Posterior cingulate gyrus (tissue), 11 donors: ENCODE measurements at regions of chr14 and their contacts with region 1.

Region 1: DNA sequence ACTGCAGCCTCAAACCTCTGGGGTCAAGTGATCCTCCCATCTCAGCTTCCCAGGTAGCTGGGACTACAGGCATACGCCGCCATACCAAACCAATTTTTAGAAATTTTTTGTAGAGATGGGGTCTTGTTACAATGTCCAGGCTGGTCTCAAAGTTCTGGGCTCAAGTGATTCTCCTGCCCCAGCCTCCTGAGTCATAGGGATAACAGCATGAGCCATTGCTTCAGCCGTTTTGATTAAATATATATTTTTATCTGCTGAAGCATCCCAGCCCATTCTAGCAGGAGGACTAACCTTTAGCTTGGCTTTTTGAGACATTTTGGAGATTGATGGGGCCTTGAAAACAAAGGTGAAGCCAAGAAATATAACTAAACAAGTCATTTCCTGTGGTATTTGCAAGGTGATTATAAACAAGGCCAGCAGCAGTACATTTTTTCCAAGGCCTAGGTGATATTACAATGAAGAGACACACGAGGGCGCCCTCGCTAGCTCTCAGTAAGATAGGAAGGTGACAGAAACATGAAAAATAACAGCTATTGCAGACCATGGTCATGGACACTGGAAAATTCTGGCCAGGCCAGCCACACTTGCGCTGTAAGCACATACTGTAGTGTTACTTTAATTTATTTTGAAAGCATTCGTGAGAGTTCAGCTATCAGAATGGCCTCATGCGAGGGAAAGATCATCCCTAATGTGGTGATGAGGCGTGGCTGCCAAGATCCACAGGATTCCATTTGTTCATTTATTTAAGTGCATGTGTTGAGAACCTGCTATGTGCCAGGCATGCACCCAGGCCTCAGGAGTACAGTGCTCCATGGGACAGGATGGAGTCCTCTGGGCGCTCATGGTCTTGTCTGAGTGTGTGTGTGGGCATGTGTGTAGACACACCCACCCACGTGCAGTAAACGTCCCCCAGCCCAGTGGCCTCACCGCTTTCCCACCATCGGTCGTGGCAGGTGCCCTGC is 63.5 kb downstream of the DGLUCY start:
- DNase-seq: peak in 7 of 10 donors; percentile 24 to 83 (median 41)

Region 2: DNA sequence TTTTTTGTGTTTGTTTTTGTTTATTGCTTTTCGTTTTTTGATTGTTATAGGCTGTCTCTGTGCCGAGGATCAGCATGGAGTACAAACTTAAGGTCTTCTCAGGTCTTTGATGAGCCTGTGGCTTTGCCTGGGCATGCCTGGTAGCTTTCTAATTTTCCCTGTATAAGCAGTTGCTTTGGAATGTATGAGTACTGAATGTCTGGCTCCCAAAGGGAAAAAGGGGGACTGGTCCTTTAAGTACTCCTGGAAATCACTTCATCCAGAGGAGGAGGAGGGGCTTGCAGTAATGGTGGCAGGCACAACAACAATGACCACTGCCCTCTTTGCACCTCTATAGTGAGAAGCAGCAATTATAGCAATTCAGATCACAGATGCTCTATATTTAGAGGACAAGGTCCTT is 293.6 kb before region 1 on chr14:
- intact Hi-C with region 1: no loop called
- DNase-seq: no peak

Region 3: DNA sequence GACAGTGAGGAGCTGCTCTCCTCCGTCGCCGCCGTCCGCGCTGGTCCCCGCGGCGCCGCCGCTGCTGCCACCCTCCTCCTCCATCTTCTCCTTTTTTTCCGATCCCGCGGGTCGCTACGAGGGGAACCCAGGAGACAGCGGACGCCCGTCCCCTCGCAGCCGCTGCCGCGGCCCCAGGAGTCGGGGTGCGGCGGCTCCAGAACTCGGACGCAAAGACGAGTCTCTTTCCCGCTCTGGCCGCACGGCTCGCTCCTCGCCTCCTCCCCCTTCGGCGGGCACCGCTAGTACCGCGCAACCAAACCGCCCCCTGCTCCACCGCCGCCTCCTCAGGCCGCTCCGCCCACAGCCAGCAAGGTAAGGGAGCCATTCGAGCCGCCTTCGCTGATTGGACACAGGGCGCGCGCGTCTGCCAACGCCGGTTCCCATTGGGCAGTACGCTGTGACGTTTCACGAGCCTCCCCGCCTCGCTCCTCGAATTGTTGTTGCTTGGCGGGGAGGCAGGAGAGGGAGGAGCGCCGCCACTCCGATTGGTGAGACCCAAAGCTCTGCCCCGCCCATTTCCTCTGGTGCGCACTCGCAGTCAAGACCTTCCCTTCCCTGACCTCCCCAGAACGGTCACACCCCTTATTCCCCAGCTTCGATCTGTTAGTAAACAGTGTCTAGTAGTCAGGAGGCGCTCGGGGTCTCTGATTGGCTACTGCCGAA is 116.9 kb before region 1 on chr14 and contains the start of gene RPS6KA5:
- intact Hi-C with region 1: loop called (anchors 5 kb)
- DNase-seq: peak; percentile 100

Region 4: DNA sequence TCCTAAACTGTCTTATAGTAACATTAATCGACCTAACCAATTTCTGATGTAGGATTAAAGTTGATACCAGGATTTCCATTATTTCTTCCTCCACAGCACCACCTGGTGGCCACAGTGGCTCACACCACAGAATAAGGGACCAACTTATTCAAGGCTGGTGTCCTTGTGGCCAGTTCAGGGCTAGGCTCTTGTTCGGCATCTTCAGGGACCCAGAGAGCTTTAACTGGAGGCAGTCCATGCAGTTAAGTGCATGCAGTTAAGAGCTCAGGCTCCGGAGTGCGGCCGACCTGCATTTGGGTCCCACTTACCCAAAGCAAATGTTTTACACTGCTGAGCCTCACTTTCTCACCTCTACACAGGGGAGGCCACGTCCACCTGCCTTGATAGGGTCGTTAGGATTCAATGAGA is 109.2 kb after region 1 on chr14:
- intact Hi-C with region 1: loop called (anchors 1 kb)
- DNase-seq: peak; percentile 29 to 95 (median 81)